ENCODE measurements at regions of chr6 and their contacts with region 1.

Region 1: GRCh38 chr6:57316581-57317059 is 810 bp upstream of the PRIM2 start:
- DNase-seq: peak; percentile 91
- ATAC-seq: peak; percentile 78
- H3K4me3 ChIP-seq: peak overlapping the region; percentile 89 to 96
- H3K27ac ChIP-seq: peak overlapping the region; percentile 61
- H3K4me1 ChIP-seq: peaks cover 4 to 35% of the 10 kb centered on the region in 2 experiments
- H3K27me3 ChIP-seq: no peaks in the 10 kb centered on the region
- CTCF ChIP-seq: peak; percentile 68 to 84 (median 83)
- POLR2A ChIP-seq: peak; percentile 52
- RAD21 ChIP-seq: peak; percentile 98

Region 2: GRCh38 chr6:55694148-55694547 is 1622.5 kb before region 1 on chr6:
- CTCF ChIA-PET with region 1: no interaction called
- POLR2A ChIA-PET with region 1: no interaction called
- RAD21 ChIA-PET with region 1: no interaction called
- intact Hi-C with region 1: no loop called
- DNase-seq: no peak
- ATAC-seq: no peak
- H3K4me3 ChIP-seq: no peak overlapping the region
- H3K27ac ChIP-seq: no peak overlapping the region
- H3K4me1 ChIP-seq: peaks cover 0 to 3% of the 10 kb centered on the region in 2 experiments; a peak in 1 of 4 replicates
- H3K27me3 ChIP-seq: no peaks in the 10 kb centered on the region
- CTCF ChIP-seq: no peak
- POLR2A ChIP-seq: no peak
- RAD21 ChIP-seq: no peak

Region 3: GRCh38 chr6:56370561-56371211 is 945.9 kb before region 1 on chr6:
- CTCF ChIA-PET with region 1: no interaction called
- POLR2A ChIA-PET with region 1: no interaction called
- RAD21 ChIA-PET with region 1: no interaction called
- intact Hi-C with region 1: loop called (anchors 5 kb)
- DNase-seq: no peak
- ATAC-seq: peak; percentile 48
- H3K4me3 ChIP-seq: no peak overlapping the region
- H3K27ac ChIP-seq: no peak overlapping the region
- H3K4me1 ChIP-seq: peaks cover 11 to 18% of the 10 kb centered on the region in 2 experiments
- H3K27me3 ChIP-seq: no peaks in the 10 kb centered on the region
- CTCF ChIP-seq: no peak
- POLR2A ChIP-seq: no peak
- RAD21 ChIP-seq: no peak

Region 4: DNA sequence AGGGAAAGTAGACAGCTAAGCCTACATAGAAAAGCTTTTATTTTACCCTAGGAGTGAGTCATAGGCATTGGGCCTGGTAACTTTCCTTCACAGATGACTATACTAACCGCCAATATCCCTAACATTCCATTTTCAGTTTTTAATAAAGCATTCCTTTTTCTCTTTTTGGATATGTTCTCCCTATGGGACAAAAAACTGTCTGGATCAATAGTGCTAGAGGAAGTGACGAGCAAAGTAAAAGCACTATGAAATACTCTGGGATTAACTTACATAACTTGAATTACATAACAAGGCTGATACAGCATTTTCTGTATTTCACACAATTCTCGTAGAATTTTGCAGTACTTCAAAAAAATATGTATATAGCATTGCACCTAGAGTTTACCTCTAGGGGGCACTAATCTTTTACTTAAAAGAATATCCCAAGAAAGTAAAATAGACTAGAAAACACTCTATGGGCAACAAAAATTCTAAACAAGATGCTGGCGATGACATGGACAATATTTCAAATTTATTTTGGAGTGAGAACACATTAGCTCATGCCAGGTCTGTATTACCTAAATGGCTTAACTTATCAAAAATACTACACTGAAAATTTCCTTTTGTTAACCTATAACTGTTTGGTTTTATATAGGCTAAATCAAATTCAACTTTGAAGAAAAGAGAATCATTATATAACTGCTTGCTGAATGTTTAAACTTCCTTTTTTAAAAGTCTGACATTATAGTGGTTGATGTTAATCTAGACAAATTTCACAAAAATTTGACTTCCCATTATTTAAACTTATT is 607.6 kb before region 1 on chr6:
- CTCF ChIA-PET with region 1: interaction called, 3 read pairs
- POLR2A ChIA-PET with region 1: no interaction called
- RAD21 ChIA-PET with region 1: no interaction called
- intact Hi-C with region 1: loop called (anchors 5 kb)
- DNase-seq: peak; percentile 66
- ATAC-seq: no peak
- H3K4me3 ChIP-seq: no peak overlapping the region; a peak in 1 of 4 replicates
- H3K27ac ChIP-seq: peak overlapping the region; percentile 74
- H3K4me1 ChIP-seq: peaks cover 54 to 83% of the 10 kb centered on the region in 2 experiments
- H3K27me3 ChIP-seq: no peaks in the 10 kb centered on the region
- CTCF ChIP-seq: peak; percentile 43 to 67 (median 64); a peak in 5 of 6 replicates
- POLR2A ChIP-seq: no peak
- RAD21 ChIP-seq: peak; percentile 71

Region 5: GRCh38 chr6:57021086-57021720 is 295.4 kb before region 1 on chr6:
- CTCF ChIA-PET with region 1: no interaction called
- POLR2A ChIA-PET with region 1: no interaction called
- RAD21 ChIA-PET with region 1: no interaction called
- intact Hi-C with region 1: loop called (anchors 10 kb)
- DNase-seq: peak; percentile 51
- ATAC-seq: peak; percentile 96
- H3K4me3 ChIP-seq: no peak overlapping the region
- H3K27ac ChIP-seq: no peak overlapping the region
- H3K4me1 ChIP-seq: peaks cover 0 to 4% of the 10 kb centered on the region in 2 experiments; a peak in 1 of 4 replicates
- H3K27me3 ChIP-seq: no peaks in the 10 kb centered on the region
- CTCF ChIP-seq: peak; percentile 39 to 64 (median 52); a peak in 4 of 6 replicates
- POLR2A ChIP-seq: no peak
- RAD21 ChIP-seq: peak; percentile 59

Region 6: DNA sequence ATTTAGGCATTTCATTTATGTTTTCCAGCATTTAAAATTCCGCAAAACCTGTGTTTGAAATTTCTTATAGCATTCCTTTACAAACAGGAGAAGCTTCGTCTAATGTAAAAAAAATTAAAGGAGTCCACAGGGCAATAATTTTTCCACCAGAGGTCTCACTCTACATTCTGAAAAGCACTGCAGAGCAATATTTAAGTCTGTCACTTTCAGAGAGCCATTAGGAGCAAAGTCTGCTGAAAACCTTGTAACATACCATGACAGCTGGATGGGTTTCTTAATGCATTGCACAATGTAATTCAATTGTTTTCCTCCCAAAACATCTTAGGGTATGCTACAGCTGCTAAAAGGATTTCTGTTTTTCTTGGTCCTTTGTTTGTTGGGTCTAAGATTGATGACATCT is 126.5 kb before region 1 on chr6:
- CTCF ChIA-PET with region 1: interaction called, 9 read pairs
- POLR2A ChIA-PET with region 1: no interaction called
- RAD21 ChIA-PET with region 1: no interaction called
- intact Hi-C with region 1: loop called (anchors 2 kb)
- DNase-seq: no peak
- ATAC-seq: no peak
- H3K4me3 ChIP-seq: no peak overlapping the region
- H3K27ac ChIP-seq: no peak overlapping the region
- H3K4me1 ChIP-seq: no peaks in the 10 kb centered on the region
- H3K27me3 ChIP-seq: no peaks in the 10 kb centered on the region
- CTCF ChIP-seq: peak in 2 of 3 experiments; percentile 17 to 36; a peak in 3 of 6 replicates
- POLR2A ChIP-seq: no peak
- RAD21 ChIP-seq: peak; percentile 46